ENCODE measurements at regions of chr1 and their contacts with region 1.

Region 1: DNA sequence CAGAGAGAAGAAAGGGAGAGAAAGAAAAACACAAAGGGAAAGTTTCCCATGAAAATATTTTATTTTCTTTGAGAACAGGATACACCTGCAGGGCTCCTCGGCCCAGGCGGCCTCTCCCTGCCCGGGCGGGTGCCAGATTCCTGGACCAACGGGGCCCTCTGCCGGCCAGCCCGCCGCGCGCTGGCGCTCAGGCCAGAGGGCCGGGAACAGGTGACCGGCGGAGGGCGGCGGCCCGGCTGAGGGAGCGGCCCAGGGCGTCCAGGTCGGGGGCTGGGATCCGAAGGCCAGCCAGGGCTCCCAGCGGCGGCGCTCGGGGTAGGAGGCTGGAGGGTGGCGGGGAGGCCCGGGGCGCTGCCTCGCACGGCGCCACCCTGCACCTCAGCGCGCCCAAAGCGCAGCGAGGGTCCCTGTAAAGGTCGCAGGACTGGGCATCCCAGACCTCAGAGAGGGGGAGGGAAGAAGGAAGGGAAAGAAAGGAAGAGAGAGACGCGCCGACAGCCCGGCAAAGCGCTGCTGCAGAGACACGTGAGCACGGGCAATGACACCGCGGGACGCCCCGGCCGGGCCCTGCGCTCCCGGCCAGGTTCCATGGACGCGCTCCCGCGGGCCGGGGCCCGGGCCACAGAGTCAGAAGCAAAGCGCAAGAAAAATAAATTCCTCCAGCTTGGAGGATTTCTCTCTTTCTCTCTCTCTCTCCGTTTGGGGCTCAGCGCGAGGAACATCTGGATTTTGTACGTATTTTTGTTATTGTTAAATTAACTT is 927 bp downstream of the WNT9A start:
- DNase-seq: peak; percentile 92
- H3K4me3 ChIP-seq: peak overlapping the region; percentile 35 to 75 (median 72)
- H3K27ac ChIP-seq: peak overlapping the region; percentile 84 to 97 (median 93)
- H3K4me1 ChIP-seq: peaks cover 7 to 67% (median 65%) of the 10 kb centered on the region in 4 donors
- H3K27me3 ChIP-seq: no peaks in the 10 kb centered on the region
- CTCF ChIP-seq: peak; percentile 39 to 80 (median 54)
- EP300 ChIP-seq: no peak
- POLR2A ChIP-seq: no peak

Region 2: DNA sequence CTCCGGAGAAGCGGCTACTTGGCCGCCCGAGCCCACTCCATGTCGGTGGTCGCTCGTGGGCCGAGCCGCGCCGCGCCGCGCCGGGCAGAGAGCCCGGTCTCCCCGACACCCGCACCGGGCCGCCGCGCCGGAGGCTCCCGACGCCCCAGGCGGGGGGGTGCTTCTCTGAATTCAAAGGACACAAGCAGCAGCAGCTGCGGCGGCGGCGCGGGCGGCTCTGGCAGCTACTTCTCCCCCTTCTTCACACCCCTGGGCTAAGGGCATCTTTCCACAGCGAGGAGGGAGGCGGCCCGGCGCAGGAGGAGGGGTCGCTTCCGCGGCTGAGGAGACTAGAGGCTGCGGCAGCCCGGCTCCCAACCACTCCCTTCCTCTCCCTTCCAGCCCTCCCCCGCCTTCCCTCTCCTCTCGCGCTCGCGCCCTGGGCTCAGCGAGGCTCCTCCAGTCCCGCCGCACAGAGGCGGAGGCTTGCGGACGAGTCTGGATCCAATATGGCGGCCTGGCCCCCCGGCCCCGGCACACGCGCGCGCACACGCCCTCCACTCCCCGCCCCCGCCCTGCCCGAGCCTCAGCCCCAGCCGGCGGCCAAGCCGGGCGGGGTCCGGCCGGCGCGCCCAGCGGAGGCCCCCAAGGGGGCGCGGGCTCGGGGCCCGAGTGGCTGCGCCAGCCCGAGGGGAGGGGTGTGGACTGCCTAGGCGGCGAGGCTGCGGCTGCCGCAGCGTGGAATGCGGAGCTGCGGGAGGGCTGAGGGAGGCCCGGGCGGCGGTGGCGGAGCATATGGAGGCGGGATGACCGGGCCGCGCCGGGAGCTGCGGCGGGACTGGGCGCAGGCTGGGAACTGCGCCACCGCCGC is 628.6 kb before region 1 on chr1 and contains the start of gene CDC42BPA:
- intact Hi-C with region 1: loop called (anchors 5 kb)
- DNase-seq: peak; percentile 94
- H3K4me3 ChIP-seq: peak within 1 kb of the TSS; percentile 65 to 96 (median 85)
- H3K27ac ChIP-seq: peak within 1 kb of the TSS; percentile 86 to 97 (median 96)
- H3K4me1 ChIP-seq: peaks cover 0 to 23% (median 11%) of the 10 kb centered on the region in 4 donors
- H3K27me3 ChIP-seq: no peaks in the 10 kb centered on the region
- CTCF ChIP-seq: no peak
- EP300 ChIP-seq: no peak
- POLR2A ChIP-seq: peak; percentile 38 to 55
- total RNA-seq, gene CDC42BPA: 60.8 to 93.6 (median 66.3) TPM

Region 3: GRCh38 chr1:227437495-227438008 is 509.3 kb before region 1 on chr1:
- intact Hi-C with region 1: no loop called
- DNase-seq: no peak
- H3K4me3 ChIP-seq: peak overlapping the region; percentile 13 to 46 (median 42)
- H3K27ac ChIP-seq: peak overlapping the region in 1 of 4 donors; percentile 50
- H3K4me1 ChIP-seq: peaks cover 0 to 16% (median 15%) of the 10 kb centered on the region in 4 donors
- H3K27me3 ChIP-seq: no peaks in the 10 kb centered on the region
- CTCF ChIP-seq: peak in 1 of 4 experiments; percentile 34
- EP300 ChIP-seq: no peak
- POLR2A ChIP-seq: no peak

Region 4: DNA sequence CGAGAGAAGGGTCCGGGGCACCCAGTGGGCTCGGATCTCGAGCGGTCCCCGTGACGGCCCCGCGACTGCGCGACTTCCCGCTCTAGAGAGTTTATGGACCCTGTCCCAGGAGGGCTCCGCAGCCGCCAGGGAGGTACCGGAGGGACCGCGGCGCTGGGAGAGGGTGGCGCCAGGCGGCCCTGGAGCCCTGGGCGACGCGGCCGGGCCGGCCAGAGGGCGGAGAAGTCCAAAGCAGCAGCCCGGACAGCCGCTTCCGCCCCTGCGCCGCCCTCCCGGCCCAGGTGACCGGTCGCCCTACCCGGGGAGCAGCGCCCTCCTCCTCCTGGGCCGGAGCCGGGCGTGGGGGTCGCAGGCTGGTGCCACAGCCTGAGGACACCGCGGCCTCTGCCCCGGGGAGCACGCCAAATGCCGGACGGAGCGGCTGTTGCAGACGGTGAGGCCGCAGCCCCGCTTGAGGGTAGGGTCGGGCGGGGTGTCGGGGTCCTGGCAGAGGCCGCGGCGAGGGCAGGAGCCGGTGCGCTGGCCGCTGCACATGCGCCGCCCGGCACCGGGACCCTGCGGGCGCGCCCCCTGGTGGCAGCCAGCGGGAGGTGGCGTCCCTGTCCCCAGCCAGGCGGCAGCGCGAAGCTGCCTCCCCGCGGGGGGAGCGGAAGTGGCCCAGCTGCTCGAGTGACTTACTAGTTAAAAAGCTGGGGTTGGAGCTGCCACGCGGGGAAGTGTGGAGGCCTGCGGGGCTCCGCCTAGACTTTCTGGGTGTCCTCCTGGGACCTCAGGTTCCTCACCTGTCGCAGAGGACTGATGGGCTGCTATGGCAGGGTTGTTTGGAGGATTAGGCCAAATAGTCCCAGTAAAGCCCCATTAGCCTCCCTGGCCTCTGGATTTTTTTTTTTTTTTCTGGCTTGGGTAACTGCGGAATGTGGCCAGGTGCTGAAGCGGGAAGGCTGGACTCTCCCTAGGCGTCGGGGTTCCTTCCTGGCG is 404.4 kb before region 1 on chr1:
- intact Hi-C with region 1: loop called (anchors 5 kb)
- DNase-seq: peak; percentile 94
- H3K4me3 ChIP-seq: peak overlapping the region; percentile 63 to 90 (median 77)
- H3K27ac ChIP-seq: peak overlapping the region; percentile 69 to 82 (median 76)
- H3K4me1 ChIP-seq: peaks cover 0 to 19% (median 17%) of the 10 kb centered on the region in 4 donors
- H3K27me3 ChIP-seq: no peaks in the 10 kb centered on the region
- CTCF ChIP-seq: peak; percentile 38 to 99 (median 63)
- EP300 ChIP-seq: no peak
- POLR2A ChIP-seq: no peak

Region 5: DNA sequence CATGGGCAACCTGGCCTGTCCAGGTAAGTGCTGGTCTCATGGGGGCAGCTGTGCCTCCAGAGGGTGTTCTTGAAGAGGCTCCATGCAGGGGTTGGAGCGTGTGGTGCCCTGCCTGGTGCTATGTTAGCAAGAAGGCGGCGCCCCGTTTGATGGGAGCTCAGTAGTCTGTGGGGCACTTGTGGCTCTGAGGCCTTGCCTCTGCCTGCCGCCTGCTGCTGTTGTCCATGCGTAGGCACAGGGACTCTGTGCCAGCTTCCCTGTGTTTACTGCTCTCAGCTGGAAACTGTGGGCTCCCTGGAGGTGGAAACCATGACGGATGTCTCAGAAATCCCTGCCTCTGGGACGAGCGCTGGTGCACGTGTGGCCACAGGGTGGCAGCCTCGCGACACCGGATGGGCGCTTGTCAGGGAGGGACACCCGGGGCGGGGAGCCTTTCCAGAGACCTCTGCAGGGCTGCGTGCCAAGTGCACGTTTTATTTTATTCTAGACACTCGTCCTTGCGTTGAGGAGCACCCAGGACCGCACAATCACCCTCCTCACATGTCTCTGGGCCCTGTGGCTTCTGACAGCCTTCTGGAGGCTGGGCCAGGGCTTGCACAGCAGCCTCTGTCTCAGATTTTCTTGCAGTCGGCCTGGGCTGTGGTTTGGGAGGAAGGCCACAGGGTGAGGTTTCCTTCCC is 184.4 kb before region 1 on chr1:
- intact Hi-C with region 1: loop called (anchors 1 kb)
- DNase-seq: peak; percentile 96
- H3K4me3 ChIP-seq: no peak overlapping the region
- H3K27ac ChIP-seq: peak overlapping the region; percentile 54 to 89 (median 75)
- H3K4me1 ChIP-seq: peaks cover 0 to 59% (median 56%) of the 10 kb centered on the region in 4 donors
- H3K27me3 ChIP-seq: no peaks in the 10 kb centered on the region
- CTCF ChIP-seq: peak; percentile 77 to 94 (median 88)
- EP300 ChIP-seq: no peak
- POLR2A ChIP-seq: no peak

Region 6: GRCh38 chr1:227886993-227887696 is 59.7 kb before region 1 on chr1:
- intact Hi-C with region 1: loop called (anchors 1 kb)
- DNase-seq: peak; percentile 92
- H3K4me3 ChIP-seq: peak overlapping the region; percentile 52 to 72 (median 62)
- H3K27ac ChIP-seq: peak overlapping the region; percentile 91 to 99 (median 96)
- H3K4me1 ChIP-seq: peaks cover 0 to 33% (median 22%) of the 10 kb centered on the region in 4 donors
- H3K27me3 ChIP-seq: no peaks in the 10 kb centered on the region
- CTCF ChIP-seq: no peak
- EP300 ChIP-seq: peak in 2 of 4 donors; percentile 69 to 70
- POLR2A ChIP-seq: peak in 1 of 2 donors; percentile 13

Measured in sigmoid colon (tissue), 7 donors.